Activated T-helper 1 cell treated with anti-CD3 and anti-CD28 coated beads, Interleukin-12 subunit alpha, Interleukin-12 subunit beta, Interleukin-2, Interleukin-4 antibody, amounts not matched to agents 30 ng/mL and 10 ng/mL and 1 ng/mL, durations not matched to agents 14 hours and 24 hours and 36 hours (primary cell): ENCODE measurements at regions of chr19 and their contacts with region 1.

Region 1: DNA sequence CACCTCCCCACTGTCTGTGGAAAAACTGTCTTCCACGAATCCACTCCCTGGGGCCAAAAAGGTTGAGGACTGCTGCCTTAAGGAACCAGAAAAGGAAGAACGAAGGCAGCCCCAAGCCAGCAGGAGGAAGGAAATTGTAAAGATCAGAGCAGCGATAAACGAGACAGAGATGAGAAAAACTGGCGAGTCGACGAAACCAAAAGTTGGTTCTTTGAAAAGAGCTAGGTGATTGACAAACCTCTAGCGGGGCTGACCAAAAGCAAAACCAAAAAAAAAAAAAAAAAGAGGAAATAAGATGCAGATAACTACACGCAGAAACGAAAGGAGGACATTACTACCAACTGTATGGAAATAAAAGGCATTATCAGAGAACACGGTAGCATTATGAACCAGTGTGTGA is 76.9 kb downstream of the GADD45B start:
- DNase-seq: peak; percentile 69
- H3K4me3 Mint-ChIP-seq: peak overlapping the region; percentile 7
- H3K27ac Mint-ChIP-seq: peak overlapping the region; percentile 74
- H3K4me1 Mint-ChIP-seq: peaks cover 16% of the 10 kb centered on the region
- H3K27me3 Mint-ChIP-seq: no peaks in the 10 kb centered on the region

Region 2: GRCh38 chr19:2398735-2399305 is 154.0 kb before region 1 on chr19:
- intact Hi-C with region 1: no loop called
- DNase-seq: no peak
- H3K4me3 Mint-ChIP-seq: no peak overlapping the region
- H3K27ac Mint-ChIP-seq: no peak overlapping the region
- H3K4me1 Mint-ChIP-seq: no peaks in the 10 kb centered on the region
- H3K27me3 Mint-ChIP-seq: no peaks in the 10 kb centered on the region

Region 3: DNA sequence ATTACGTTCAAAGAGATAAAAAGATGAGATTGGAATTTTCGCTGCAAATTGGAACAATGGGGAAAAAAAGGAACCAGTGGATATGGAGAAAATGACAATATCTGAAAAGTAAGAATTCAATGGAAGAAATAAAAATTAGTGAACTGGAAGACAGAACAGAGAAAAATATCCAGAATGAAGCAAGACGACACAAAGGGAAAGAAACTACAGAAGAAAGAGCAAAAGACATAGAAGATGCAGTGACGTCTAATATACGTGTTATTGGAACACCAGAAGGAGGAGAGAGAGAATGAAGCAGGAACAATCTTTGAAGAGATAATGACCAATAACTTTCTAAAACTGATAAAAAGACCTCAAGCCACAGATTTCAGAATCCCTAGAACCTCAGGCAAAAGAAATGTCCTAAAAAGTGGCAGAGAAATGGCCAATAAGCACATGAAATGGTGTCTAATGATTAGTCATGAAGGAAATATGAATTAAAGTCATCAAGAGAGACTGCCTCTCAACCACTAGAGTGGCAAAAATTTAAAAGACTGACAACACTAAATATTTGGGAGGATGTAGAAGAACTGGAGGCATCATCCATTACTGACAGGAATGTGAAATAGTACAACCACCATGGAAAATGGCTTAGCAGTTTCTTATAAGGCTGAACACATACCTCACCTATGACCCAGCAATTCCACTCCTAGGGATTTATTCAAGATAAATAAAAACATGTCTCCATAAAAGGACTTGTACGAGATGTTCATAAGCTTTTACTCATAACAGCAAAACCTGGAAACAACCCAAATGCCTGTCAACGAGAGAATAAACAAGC is 20.4 kb before region 1 on chr19:
- intact Hi-C with region 1: loop called (anchors 1 kb)
- DNase-seq: no peak
- H3K4me3 Mint-ChIP-seq: no peak overlapping the region
- H3K27ac Mint-ChIP-seq: no peak overlapping the region
- H3K4me1 Mint-ChIP-seq: peaks cover 26% of the 10 kb centered on the region
- H3K27me3 Mint-ChIP-seq: no peaks in the 10 kb centered on the region

Region 4: GRCh38 chr19:2578901-2579677 is 26.2 kb after region 1 on chr19:
- intact Hi-C with region 1: no loop called
- DNase-seq: peak; percentile 53
- H3K4me3 Mint-ChIP-seq: peak overlapping the region; percentile 33
- H3K27ac Mint-ChIP-seq: no peak overlapping the region
- H3K4me1 Mint-ChIP-seq: peaks cover 6% of the 10 kb centered on the region
- H3K27me3 Mint-ChIP-seq: peaks cover 5% of the 10 kb centered on the region

Region 5: DNA sequence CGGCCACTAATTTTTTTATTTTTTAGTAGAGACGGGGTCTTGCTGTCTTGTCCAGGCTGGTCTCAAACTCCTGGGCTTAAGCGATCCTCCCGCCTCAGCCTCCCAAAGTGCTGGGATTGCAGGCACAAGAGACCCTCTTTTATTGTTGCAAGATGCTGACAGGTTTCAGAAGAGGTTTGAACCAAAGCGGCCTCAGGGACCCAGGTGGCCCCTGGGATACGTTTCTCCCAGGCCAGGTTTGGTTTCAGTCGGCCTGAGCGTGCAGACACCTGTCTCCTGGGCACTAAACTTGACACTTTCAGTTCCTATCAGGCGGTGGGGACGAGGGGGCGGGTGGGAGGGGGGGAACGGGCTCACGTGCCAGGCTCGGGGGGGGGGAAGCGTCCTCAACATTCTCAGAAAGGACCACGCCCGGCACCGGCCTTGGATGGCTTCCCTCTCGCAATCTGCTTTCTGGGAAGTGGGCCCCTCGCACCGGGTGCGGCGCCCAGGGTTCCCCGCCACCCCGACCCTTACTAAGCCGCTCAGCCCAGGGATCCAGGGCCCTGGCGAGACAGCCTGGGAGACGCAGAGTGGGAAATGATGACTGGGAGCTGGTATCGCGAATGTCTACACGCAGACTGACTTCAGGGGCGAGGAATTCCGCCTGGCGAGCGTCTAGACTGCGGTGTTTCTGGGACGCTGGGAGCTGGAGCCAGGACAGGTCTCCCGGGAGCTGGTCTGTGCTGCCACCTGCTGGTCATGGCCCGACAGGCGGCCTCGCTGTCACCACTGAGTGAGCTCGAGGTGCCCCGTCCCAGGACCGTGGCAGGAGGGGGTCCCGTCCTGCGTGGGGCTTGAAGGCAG is 58.0 kb after region 1 on chr19:
- intact Hi-C with region 1: loop called (anchors 2 kb)
- DNase-seq: peak; percentile 79
- H3K4me3 Mint-ChIP-seq: peak overlapping the region; percentile 85
- H3K27ac Mint-ChIP-seq: peak overlapping the region; percentile 75
- H3K4me1 Mint-ChIP-seq: peaks cover 39% of the 10 kb centered on the region
- H3K27me3 Mint-ChIP-seq: peaks cover 12% of the 10 kb centered on the region